Right cardiac atrium (tissue), 5 donors: ENCODE measurements at regions of chr10 and their contacts with region 1.

Region 1: GRCh38 chr10:89793649-89794254 is 92.4 kb downstream of the KIF20B start:
- DNase-seq: no peak
- ATAC-seq: peak; percentile 63 to 69
- H3K4me3 ChIP-seq: no peak overlapping the region
- H3K27ac ChIP-seq: no peak overlapping the region
- H3K4me1 ChIP-seq: no peaks in the 10 kb centered on the region
- H3K27me3 ChIP-seq: no peaks in the 10 kb centered on the region

Region 2: DNA sequence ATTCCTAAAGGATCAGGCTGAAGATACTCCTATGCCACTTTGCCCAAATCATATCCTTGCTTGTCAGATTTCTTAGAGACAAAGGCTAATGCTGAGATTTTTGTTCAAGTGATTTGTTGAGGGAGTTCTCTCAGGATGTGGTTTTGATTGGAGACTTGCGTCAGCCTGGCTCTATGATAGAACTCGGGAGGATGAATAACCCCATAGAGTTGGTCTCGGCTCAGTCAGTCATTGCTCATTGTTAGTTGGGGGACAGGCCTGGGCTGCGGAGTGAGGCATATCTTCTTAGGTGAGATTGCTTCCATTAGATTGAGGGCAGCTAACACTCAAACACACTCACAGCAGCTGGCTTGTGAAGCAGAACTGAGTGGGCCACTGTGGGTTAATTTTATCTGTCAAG is 111.0 kb after region 1 on chr10:
- intact Hi-C with region 1: no loop called
- DNase-seq: no peak
- ATAC-seq: no peak
- H3K4me3 ChIP-seq: no peak overlapping the region
- H3K27ac ChIP-seq: no peak overlapping the region
- H3K4me1 ChIP-seq: no peaks in the 10 kb centered on the region
- H3K27me3 ChIP-seq: no peaks in the 10 kb centered on the region

Region 3: DNA sequence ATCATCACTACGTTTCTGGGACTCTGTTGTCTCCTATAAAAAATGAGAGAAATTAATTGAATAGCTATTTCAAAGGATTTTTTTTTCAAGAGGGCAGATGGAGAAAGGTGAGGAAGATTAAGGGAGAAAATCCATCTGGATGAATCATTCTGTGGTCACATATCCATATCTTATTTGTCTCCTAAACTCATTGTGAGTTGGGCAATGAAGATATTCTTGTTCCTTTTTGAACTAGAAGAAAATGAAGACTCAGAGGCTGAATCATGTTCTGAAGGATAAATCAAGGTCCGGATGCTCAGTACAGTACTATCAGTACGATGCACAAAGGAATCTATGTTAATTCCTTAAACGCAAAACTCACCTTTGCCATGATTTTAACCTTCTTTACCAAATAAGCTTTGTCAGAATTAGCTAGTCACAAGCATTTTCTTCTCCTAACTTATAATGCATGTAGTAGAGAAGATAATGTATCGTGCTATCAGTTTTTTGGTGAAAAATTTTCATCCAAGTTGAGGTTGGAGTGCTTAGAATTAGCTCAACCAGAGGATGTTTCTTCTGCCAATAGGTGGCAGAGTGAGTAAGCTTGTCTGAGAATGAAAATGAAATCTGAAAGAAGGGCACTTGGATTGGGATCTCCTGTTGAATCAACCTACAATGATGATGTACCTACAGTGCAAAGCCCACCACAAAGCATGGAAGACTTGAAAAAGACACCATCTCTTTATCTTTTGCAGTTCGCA is 354.5 kb after region 1 on chr10:
- intact Hi-C with region 1: loop called in 2 of 4 experiments (anchors 10 kb)
- DNase-seq: no peak
- ATAC-seq: no peak
- H3K4me3 ChIP-seq: no peak overlapping the region
- H3K27ac ChIP-seq: no peak overlapping the region
- H3K4me1 ChIP-seq: no peaks in the 10 kb centered on the region
- H3K27me3 ChIP-seq: no peaks in the 10 kb centered on the region

Region 4: DNA sequence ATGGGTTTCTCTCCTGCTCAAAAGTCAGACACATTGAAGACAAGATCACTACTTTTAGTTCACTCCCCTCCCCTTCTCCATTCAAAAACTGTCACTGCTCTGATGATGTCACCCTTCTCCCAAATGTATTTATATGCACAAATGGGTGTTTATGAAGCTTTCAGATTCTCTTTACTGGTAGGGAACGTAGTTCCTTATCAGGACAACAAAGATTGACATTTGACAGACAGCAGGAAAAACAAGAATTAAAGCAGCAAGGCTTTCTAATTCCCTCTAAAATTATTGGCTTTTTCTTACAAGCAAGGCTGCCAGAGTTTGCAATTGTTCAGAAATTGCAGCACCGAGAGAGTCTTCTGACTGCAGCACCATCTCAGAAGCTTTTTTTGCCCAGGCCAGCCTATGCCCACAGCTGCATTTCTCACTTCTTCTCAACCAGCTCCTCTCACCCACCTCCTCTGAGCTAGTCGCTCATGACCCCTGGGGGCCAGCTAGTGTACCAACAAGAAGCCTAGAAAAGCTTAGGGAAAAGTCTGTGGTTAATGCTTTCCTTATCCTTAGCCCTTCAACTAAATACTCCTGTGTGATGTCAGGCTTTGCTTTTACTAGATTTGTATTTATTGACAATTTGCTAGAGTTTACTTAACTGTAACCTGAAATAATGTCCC is 799.0 kb after region 1 on chr10:
- intact Hi-C with region 1: loop called in 1 of 4 experiments (anchors 5 kb)
- DNase-seq: peak; percentile 48 to 74 (median 72)
- ATAC-seq: peak; percentile 70 to 75
- H3K4me3 ChIP-seq: no peak overlapping the region
- H3K27ac ChIP-seq: no peak overlapping the region
- H3K4me1 ChIP-seq: no peaks in the 10 kb centered on the region
- H3K27me3 ChIP-seq: no peaks in the 10 kb centered on the region

Region 5: DNA sequence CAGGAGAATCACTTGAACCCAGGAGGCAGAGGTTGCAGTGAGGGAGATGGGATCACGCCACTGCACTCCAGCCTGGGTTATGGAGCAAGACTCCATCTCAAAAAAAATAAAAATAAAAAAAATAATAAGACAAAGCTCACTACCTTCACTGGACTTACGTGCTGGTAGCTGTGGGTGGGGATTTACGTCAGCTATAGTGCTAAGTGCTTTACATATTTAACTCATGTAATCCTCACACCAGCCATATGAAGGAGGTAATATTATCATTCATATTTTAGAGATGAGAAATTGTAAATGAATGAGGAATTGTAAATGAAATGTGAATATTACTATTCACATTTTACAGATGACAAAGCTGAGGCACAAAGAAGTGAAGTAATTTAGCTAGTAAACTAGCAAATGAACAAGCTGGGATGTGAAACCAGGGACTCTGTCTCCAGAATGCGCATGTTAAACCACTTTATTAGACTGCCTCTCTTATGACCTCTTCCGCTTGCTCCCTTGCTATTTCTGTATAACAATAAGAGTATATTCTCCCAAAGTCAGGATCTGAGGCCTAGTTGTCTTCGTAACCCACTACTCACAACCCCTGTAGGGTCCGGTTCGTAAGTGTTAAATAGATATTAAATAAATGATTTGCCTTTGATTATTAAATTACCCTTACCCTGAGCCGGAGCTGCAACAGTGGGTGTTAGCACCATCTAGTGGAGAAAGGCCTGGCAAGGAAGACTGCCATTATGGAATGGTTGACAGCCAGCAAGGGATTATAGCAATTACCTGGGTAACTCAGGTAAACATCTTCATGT is 993.8 kb after region 1 on chr10:
- intact Hi-C with region 1: loop called in 1 of 4 experiments (anchors 10 kb)
- DNase-seq: peak in 1 of 3 donors; percentile 59
- ATAC-seq: peak in 1 of 2 donors; percentile 60
- H3K4me3 ChIP-seq: no peak overlapping the region
- H3K27ac ChIP-seq: no peak overlapping the region
- H3K4me1 ChIP-seq: no peaks in the 10 kb centered on the region
- H3K27me3 ChIP-seq: no peaks in the 10 kb centered on the region

Region 6: DNA sequence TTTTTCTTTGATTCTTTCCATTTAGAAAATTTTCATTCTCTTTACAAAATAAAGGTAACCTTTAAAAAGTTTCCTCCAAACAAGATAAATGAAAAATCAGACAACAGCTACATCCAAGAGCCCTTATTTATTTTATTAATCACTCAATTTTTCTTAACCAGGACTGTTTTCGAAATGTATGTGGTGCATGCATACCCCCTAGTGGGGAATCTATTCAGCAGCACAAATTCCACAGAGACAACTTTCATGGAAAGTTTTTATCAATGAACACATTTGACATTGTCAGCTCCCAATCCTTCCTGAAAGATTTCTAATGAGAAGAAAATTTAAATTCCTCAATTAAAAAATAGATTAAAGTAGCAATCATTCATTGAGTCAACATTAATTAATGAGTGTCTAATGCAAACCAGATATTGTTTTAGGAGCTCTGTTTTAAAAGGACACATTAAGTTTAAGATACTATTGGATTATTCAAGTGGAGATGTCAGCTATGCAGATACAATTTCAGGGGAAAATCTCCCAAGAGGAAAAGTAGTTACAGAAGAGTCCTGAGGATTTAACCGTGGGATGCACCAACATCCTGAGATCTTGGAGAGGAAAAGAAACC is 1069.3 kb after region 1 on chr10:
- intact Hi-C with region 1: loop called in 2 of 4 experiments (anchors 5 to 10 kb)
- DNase-seq: no peak
- ATAC-seq: no peak
- H3K4me3 ChIP-seq: no peak overlapping the region
- H3K27ac ChIP-seq: no peak overlapping the region
- H3K4me1 ChIP-seq: no peaks in the 10 kb centered on the region
- H3K27me3 ChIP-seq: no peaks in the 10 kb centered on the region